ENCODE measurements at regions of chrX and their contacts with region 1.

Region 1: DNA sequence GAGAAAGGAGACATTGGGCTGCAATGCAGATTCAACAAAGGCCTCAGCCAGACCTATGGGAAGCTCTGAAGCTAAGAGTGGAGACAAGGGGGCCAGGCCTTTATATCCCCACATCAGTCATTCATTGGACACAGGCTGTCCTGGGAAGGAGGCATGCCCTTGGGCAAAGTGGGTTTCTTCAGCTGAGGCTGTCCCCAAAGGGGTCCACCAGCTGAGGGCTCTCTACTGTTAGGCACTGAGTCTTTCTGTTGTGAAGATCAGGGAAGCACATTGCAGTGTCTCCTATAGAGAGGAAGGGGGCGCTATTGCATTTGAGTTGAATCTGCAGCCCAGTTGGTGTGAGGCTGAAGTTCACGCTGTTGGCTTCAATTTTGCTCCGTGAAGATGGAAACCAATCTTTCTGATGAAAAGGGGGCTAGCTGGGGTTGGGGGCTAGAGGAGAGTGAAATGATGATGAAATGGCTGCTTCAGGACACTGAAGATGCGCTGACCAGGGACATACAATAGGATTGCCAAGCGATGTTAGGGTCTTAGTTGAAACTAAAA is 48.0 kb downstream of the SLC25A5 start:
- DNase-seq: peak; percentile 29
- H3K4me3 ChIP-seq: no peak overlapping the region
- H3K27ac ChIP-seq: no peak overlapping the region
- H3K4me1 ChIP-seq: no peaks in the 10 kb centered on the region
- H3K27me3 ChIP-seq: no peaks in the 10 kb centered on the region
- CTCF ChIP-seq: peak; percentile 61 to 78

Region 2: GRCh38 chrX:119134446-119134845 is 381.8 kb before region 1 on chrX:
- CTCF ChIA-PET with region 1: no interaction called
- dilution Hi-C with region 1: no loop called
- in situ Hi-C with region 1: no loop called
- intact Hi-C with region 1: no loop called
- DNase-seq: no peak
- H3K4me3 ChIP-seq: no peak overlapping the region
- H3K27ac ChIP-seq: no peak overlapping the region
- H3K4me1 ChIP-seq: no peaks in the 10 kb centered on the region
- H3K27me3 ChIP-seq: no peaks in the 10 kb centered on the region
- CTCF ChIP-seq: no peak

Region 3: GRCh38 chrX:119391279-119391678 is 125.0 kb before region 1 on chrX:
- CTCF ChIA-PET with region 1: no interaction called
- dilution Hi-C with region 1: no loop called
- in situ Hi-C with region 1: no loop called
- intact Hi-C with region 1: loop called (anchors 1 kb)
- DNase-seq: peak; percentile 16
- H3K4me3 ChIP-seq: no peak overlapping the region
- H3K27ac ChIP-seq: no peak overlapping the region
- H3K4me1 ChIP-seq: no peaks in the 10 kb centered on the region
- H3K27me3 ChIP-seq: no peaks in the 10 kb centered on the region
- CTCF ChIP-seq: peak; percentile 36 to 52

Region 4: DNA sequence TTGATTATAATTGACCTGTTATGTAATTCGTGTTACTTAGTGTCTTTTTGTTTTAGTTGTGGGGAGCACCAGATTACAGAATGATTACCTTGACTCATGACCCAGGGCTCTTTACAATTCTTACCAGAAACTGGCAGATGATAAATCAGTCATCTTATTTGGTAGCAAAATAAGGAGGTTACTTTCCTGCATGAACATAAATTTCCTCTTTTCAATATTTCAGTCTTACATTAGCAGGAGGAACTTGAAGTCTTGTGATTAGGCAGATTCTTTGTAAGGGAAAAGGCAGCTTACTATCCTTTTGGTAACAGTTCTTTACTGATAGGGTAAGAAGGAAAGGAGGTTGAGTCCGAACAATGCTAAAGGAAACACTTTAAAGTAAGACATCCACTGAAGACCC is 73.9 kb before region 1 on chrX:
- CTCF ChIA-PET with region 1: no interaction called
- dilution Hi-C with region 1: no loop called
- in situ Hi-C with region 1: no loop called
- intact Hi-C with region 1: no loop called
- DNase-seq: no peak
- H3K4me3 ChIP-seq: no peak overlapping the region
- H3K27ac ChIP-seq: no peak overlapping the region
- H3K4me1 ChIP-seq: no peaks in the 10 kb centered on the region
- H3K27me3 ChIP-seq: no peaks in the 10 kb centered on the region
- CTCF ChIP-seq: no peak

Region 5: DNA sequence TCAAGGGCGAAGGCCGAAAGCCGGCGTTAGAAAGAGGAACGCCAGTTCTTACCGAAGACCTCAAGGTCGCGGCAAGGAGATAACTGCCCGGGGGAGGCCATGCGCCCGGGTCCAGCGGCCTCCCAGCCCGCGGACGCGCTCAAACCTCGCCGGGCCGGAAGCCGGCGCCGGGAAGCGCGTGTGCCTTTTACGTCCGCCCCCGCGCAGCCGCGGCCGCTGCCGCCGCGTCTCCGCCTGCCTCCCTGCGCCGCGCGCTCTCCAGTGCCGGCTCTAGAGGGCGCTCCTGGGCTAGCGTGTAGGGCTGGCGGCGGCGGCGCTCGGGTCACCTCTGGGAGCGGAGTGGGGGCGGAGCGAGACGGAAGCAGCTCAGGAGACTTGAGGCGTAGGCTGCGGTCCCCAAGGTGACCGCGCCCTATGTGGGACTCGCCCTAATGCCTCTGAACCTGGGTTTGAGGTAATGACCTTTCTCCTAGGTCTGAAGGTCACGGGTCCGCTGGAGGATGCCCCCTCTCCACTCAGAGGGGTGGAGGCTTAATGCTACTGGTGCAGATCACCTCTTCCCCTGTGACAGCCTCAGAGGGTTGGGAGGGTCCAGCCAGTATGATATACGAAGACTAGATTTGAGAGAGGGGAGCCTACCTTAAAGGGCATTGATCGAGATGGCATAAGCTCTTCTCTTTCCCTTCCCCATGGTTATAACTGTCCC is 47.1 kb before region 1 on chrX:
- CTCF ChIA-PET with region 1: interaction called, 3 read pairs
- dilution Hi-C with region 1: no loop called
- in situ Hi-C with region 1: no loop called
- intact Hi-C with region 1: loop called (anchors 1 kb)
- DNase-seq: peak; percentile 76
- H3K4me3 ChIP-seq: peak overlapping the region; percentile 68 to 80 (median 68)
- H3K27ac ChIP-seq: peak overlapping the region; percentile 80
- H3K4me1 ChIP-seq: peaks cover 5% of the 10 kb centered on the region
- H3K27me3 ChIP-seq: no peaks in the 10 kb centered on the region
- CTCF ChIP-seq: peak; percentile 37 to 64

Region 6: GRCh38 chrX:119574394-119575266 is 58.4 kb after region 1 on chrX and contains the start of gene UBE2A:
- CTCF ChIA-PET with region 1: no interaction called
- dilution Hi-C with region 1: no loop called
- in situ Hi-C with region 1: no loop called
- intact Hi-C with region 1: loop called (anchors 1 kb)
- DNase-seq: peak; percentile 80
- H3K4me3 ChIP-seq: peak within 1 kb of the TSS; percentile 66 to 76 (median 75)
- H3K27ac ChIP-seq: peak within 1 kb of the TSS; percentile 66
- H3K4me1 ChIP-seq: peaks cover 11% of the 10 kb centered on the region
- H3K27me3 ChIP-seq: no peaks in the 10 kb centered on the region
- CTCF ChIP-seq: peak in 1 of 2 donors; percentile 42
- total RNA-seq, gene UBE2A: 34.0 to 67.7 TPM

Region 7: DNA sequence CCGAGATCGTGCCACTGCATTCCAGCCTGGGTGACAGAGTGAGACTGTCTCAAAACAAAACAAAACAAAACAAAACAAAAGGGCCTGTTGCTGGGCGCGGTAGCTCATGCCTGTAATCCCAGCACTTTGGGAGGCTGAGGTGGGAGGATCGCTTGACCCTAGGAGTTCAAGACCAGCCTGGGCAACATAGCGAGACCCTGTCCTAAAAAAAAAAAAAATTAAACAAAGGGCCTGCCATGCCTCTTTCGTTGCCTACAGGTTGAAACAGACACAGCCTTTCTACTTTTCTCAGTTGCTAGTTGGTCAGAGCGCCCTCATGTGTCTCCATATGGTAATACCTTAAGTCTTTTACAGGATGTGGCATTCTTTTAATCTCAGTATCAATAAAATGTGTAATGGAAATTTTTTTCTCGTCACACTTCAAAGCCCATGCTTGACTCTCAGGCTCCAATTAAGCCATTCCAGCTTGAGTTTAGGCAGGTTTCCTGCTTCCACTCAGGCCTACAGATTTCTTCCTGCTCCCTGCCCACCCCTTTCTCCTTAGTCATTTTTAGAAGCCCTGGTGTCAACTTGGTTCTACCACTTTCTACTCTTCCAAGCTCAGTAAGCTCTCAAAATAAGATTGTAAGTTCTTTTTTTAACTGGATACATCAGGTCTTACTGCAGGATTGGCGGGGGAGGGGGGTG is 237.5 kb after region 1 on chrX:
- CTCF ChIA-PET with region 1: no interaction called
- dilution Hi-C with region 1: no loop called
- in situ Hi-C with region 1: no loop called
- intact Hi-C with region 1: loop called (anchors 1 kb)
- DNase-seq: no peak
- H3K4me3 ChIP-seq: no peak overlapping the region
- H3K27ac ChIP-seq: no peak overlapping the region
- H3K4me1 ChIP-seq: peaks cover 3% of the 10 kb centered on the region
- H3K27me3 ChIP-seq: no peaks in the 10 kb centered on the region
- CTCF ChIP-seq: peak in 1 of 2 donors; percentile 51

Region 8: GRCh38 chrX:120144178-120144844 is 628.1 kb after region 1 on chrX:
- CTCF ChIA-PET with region 1: no interaction called
- dilution Hi-C with region 1: no loop called
- in situ Hi-C with region 1: loop called in 1 of 2 experiments (anchors 25 kb)
- intact Hi-C with region 1: no loop called
- DNase-seq: no peak
- H3K4me3 ChIP-seq: no peak overlapping the region
- H3K27ac ChIP-seq: no peak overlapping the region
- H3K4me1 ChIP-seq: no peaks in the 10 kb centered on the region
- H3K27me3 ChIP-seq: peaks cover 4% of the 10 kb centered on the region
- CTCF ChIP-seq: no peak